T-cell (primary cell): ENCODE measurements at regions of chr15 and their contacts with region 1.

Region 1: DNA sequence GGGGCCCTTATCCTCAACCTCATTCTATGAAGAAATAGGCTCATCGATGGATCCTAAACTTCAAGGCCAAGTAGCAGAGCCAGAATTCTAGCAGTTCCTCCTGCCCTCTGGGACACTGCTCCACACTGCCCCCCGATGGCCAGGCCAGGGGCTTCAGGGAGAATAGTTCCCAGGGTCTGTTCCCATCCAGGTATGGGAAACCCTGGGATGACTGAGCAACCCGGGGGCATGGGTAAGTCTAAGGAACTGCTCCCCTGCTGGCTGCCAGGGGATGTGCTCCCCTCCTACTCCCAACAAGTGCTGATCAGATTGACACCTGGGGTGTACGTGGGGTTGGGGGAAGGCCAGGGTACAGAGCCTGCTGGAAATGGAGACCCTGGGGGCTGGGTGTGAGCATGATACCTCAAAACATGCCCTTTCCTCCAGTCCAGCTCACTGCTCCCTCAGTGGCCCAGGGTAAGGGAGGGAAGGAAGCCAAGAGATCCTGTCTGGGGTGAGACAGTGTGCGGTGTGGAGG is 7.6 kb downstream of the ULK3 start:
- DNase-seq: peak in 18 of 35 experiments; percentile 13 to 56 (median 22)
- ATAC-seq: peak; percentile 36 to 66 (median 54)
- H3K4me3 ChIP-seq: no peak overlapping the region
- H3K4me3 Mint-ChIP-seq: no peak overlapping the region
- H3K27ac ChIP-seq: no peak overlapping the region
- H3K27ac Mint-ChIP-seq: peak overlapping the region in 1 of 2 donors; percentile 31
- H3K4me1 ChIP-seq: peaks cover 0 to 5% of the 10 kb centered on the region in 2 experiments
- H3K4me1 Mint-ChIP-seq: peaks cover 0 to 8% (median 6%) of the 10 kb centered on the region in 3 donors
- H3K27me3 ChIP-seq: no peaks in the 10 kb centered on the region
- H3K27me3 Mint-ChIP-seq: no peaks in the 10 kb centered on the region

Region 2: DNA sequence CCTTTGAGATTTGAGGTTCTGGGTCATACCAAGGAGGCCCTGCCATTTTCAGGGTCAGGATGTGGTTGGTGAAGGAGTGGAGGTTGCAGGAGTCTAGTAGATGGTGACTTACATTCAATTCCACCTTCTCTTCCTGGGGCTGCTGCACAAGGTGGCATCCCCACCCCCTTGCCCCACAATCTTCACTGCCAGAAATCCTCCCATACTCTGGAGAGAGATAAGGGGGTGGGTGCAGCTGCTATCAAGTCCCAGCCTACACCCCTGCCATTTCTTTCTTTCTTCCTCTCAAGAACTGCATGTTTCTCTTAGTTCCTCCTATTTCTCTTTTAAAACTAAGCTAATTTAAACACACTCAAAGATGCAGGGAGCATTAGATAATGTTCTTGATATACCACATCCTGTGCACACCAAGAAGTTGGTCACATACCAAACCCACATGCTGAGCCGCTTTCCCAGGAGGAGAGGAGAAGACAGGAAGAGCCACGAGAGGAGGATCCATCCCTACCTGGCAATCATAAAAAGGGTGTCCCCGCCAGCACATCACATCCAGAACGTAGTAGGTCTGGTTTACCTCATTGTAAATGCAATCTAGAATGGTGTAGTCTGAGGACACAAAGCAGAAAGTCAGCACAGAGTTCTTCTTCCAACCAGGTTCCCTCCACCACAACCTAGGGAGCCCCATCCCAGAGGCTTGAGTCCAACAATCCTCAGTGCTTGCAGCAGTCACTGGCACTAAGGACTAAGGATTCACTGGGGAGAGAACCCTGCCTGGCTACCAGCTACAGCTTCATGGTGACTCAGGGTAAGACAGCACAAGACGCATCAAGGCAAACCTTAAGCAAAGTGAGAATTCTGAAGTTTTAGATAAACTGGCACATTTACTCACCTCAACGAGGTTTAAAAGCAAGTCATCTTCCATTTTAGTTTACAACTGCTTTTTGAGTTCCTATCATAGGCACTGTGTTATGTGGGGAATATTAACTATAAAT is 771.6 kb after region 1 on chr15:
- CTCF ChIA-PET with region 1: no interaction called
- POLR2A ChIA-PET with region 1: interaction called in 1 of 2 experiments, 13 read pairs
- DNase-seq: peak in 26 of 35 experiments; percentile 3 to 49 (median 16)
- ATAC-seq: peak; percentile 80 to 84 (median 82)
- H3K4me3 ChIP-seq: peak overlapping the region in 1 of 2 donors; percentile 21
- H3K4me3 Mint-ChIP-seq: peak overlapping the region; percentile 40 to 62 (median 59)
- H3K27ac ChIP-seq: peak overlapping the region; percentile 86
- H3K27ac Mint-ChIP-seq: peak overlapping the region; percentile 92 to 99
- H3K4me1 ChIP-seq: peaks cover 36 to 47% of the 10 kb centered on the region in 2 experiments
- H3K4me1 Mint-ChIP-seq: peaks cover 39 to 53% (median 43%) of the 10 kb centered on the region in 3 donors
- H3K27me3 ChIP-seq: no peaks in the 10 kb centered on the region
- H3K27me3 Mint-ChIP-seq: no peaks in the 10 kb centered on the region